CD14-positive monocyte (primary cell): ENCODE measurements at regions of chr17 and their contacts with region 1.

Region 1: DNA sequence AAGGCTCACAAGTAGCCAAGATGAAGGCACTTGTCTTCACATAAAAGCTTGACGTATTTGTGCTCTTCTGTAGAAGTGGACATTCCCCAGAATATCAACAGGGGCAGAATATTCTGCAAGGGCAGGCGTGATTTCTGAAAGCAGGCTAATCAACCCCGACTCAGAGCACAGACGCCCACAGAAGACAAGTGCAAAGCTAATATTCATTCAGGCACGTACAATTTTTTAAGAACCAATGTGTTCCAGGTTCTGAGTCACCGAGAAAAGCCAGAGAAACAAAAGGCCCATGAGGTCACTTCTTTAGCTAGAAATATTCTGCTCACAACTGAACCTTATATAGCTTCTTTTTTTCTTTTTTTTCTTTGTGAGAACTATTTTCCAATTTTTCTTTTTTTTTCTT is 121.6 kb downstream of the DNAH9 start:
- DNase-seq: no peak
- H3K4me3 ChIP-seq: no peak overlapping the region
- H3K4me3 Mint-ChIP-seq: no peak overlapping the region
- H3K27ac ChIP-seq: no peak overlapping the region
- H3K27ac Mint-ChIP-seq: no peak overlapping the region
- H3K4me1 ChIP-seq: no peaks in the 10 kb centered on the region
- H3K4me1 Mint-ChIP-seq: no peaks in the 10 kb centered on the region
- H3K27me3 ChIP-seq: no peaks in the 10 kb centered on the region
- H3K27me3 Mint-ChIP-seq: peaks cover 0 to 4% (median 2%) of the 10 kb centered on the region in 3 donors
- CTCF ChIP-seq: no peak

Region 2: DNA sequence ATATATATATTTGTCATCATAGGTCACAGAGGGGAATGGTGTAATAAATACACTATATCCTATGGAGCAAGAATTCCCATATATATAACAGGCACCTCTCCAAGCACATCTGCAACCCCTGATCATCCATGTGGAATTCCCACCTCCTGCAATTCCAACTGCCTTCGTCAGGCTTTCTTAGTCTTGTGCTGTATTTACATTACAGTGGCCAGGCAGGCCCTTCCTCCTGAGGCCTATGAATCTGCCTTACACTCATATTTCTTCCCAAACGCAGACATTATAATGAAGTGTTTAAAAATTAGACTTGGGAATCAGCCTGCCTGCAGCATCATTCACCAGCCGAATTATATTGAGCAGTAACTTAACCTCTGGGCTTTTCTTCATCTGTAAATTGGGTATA is 140.9 kb before region 1 on chr17:
- intact Hi-C with region 1: no loop called
- DNase-seq: no peak
- H3K4me3 ChIP-seq: no peak overlapping the region
- H3K4me3 Mint-ChIP-seq: no peak overlapping the region
- H3K27ac ChIP-seq: no peak overlapping the region
- H3K27ac Mint-ChIP-seq: no peak overlapping the region
- H3K4me1 ChIP-seq: no peaks in the 10 kb centered on the region
- H3K4me1 Mint-ChIP-seq: no peaks in the 10 kb centered on the region
- H3K27me3 ChIP-seq: no peaks in the 10 kb centered on the region
- H3K27me3 Mint-ChIP-seq: no peaks in the 10 kb centered on the region
- CTCF ChIP-seq: no peak

Region 3: GRCh38 chr17:11779892-11780291 is 60.0 kb after region 1 on chr17:
- intact Hi-C with region 1: loop called in 1 of 2 experiments (anchors 10 kb)
- DNase-seq: no peak
- H3K4me3 ChIP-seq: no peak overlapping the region
- H3K4me3 Mint-ChIP-seq: no peak overlapping the region
- H3K27ac ChIP-seq: no peak overlapping the region
- H3K27ac Mint-ChIP-seq: no peak overlapping the region
- H3K4me1 ChIP-seq: no peaks in the 10 kb centered on the region
- H3K4me1 Mint-ChIP-seq: no peaks in the 10 kb centered on the region
- H3K27me3 ChIP-seq: no peaks in the 10 kb centered on the region
- H3K27me3 Mint-ChIP-seq: no peaks in the 10 kb centered on the region
- CTCF ChIP-seq: no peak

Region 4: DNA sequence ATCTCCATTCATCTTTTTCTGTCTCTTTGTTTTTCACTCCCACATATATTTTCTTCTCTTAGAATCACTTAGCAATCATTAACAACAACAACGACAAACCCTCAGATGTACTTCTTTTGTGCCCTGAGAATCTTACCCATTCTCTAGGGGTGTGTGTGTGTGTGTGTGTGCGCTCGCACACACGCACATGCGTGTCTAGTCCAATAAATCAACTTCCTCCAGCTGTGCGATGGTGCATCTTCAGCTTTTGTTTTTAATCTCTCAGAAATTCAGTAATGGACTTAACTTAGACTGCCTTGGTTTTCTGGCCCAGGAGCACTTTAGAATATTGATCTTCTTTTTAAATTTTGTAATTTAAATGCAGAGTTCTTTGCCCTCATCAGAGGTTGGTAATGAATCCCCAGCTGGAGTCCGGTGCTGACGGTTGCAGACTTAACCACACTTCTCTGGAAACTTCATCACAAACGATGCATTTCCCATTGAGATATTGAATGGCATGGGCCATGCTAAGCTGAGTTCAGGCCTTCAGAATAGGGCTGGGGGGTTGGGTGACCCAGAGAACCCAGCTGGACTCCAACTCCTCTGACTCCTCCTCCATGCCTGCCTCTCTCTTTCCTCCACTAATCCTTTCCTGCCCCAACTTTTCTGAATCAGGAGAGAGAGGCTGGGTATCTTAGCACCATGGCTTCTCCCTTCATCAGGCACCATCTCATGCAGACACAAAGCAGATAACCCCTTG is 83.5 kb after region 1 on chr17:
- intact Hi-C with region 1: no loop called
- DNase-seq: no peak
- H3K4me3 ChIP-seq: no peak overlapping the region
- H3K4me3 Mint-ChIP-seq: no peak overlapping the region
- H3K27ac ChIP-seq: no peak overlapping the region
- H3K27ac Mint-ChIP-seq: no peak overlapping the region
- H3K4me1 ChIP-seq: no peaks in the 10 kb centered on the region
- H3K4me1 Mint-ChIP-seq: no peaks in the 10 kb centered on the region
- H3K27me3 ChIP-seq: no peaks in the 10 kb centered on the region
- H3K27me3 Mint-ChIP-seq: peaks cover 0 to 2% (median 0%) of the 10 kb centered on the region in 3 donors
- CTCF ChIP-seq: no peak